Common myeloid progenitor, CD34-positive (primary cell): ENCODE measurements at regions of chr12 and their contacts with region 1.

Region 1: GRCh38 chr12:49763006-49763591 is 21.7 kb downstream of the TMBIM6 start:
- DNase-seq: peak; percentile 77 to 89 (median 85)
- H3K4me3 ChIP-seq: peak overlapping the region in 2 of 7 experiments; percentile 19 to 31
- H3K27ac ChIP-seq: peak overlapping the region in 1 of 2 experiments; percentile 36
- H3K4me1 ChIP-seq: peaks cover 23 to 36% (median 30%) of the 10 kb centered on the region in 4 experiments
- H3K27me3 ChIP-seq: no peaks in the 10 kb centered on the region

Region 2: GRCh38 chr12:49636979-49637755 is 125.9 kb before region 1 on chr12:
- CTCF ChIA-PET with region 1: interaction called, 24 read pairs
- POLR2A ChIA-PET with region 1: no interaction called
- DNase-seq: peak; percentile 69 to 85 (median 84)
- H3K4me3 ChIP-seq: peak overlapping the region in 3 of 7 experiments; percentile 1 to 61 (median 38)
- H3K27ac ChIP-seq: no peak overlapping the region
- H3K4me1 ChIP-seq: peaks cover 3 to 13% (median 7%) of the 10 kb centered on the region in 4 experiments
- H3K27me3 ChIP-seq: no peaks in the 10 kb centered on the region

Region 3: DNA sequence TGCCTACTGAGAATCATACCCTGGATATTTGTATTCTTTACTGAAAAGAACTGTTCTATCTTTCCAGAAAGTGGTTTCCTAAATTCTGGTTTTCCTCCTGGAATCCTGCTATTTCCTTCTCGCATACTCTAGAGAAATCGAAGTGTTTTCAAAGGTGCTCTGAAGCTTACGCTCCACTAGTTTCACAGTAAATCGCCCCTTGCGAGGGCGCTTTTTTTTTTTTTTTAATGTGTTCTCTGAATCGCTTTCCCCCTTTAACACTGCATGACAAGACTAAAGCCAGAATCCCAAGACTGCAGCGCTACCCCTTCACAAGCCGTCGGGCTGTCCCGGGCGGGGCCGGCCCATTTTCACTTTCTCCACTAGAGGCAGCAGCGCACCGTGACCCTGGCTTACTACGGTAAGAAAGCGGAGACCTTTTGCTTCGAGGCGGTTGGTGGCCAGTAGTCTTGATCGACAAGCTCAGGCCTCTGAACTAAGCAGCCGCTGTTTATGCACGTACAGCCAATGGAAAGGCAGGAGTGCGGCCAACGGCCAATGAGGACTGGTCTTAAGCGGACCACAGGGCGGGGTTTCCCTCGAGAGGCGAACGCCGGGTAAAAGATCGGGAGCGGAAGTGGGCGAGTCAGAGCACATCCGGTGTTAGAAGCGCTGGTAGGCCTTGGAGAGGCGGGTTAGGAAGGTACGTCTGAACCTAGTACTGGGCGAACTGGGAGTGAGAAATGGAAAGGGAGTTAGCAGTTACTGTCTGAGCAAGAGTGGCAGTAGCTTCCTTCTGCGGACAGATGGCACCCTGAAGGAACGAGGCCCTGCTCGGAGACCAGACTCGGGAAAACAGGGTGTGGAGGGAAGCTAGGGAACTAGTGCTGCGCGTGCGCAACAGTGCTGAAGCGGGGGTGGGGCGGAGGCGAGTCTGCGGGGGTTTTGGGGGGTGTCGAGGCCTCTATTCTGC is 21.9 kb before region 1 on chr12 and contains the start of gene TMBIM6:
- CTCF ChIA-PET with region 1: interaction called, 64 read pairs
- POLR2A ChIA-PET with region 1: interaction called, 10 read pairs
- DNase-seq: peak; percentile 100
- H3K4me3 ChIP-seq: peak within 1 kb of the TSS; percentile 62 to 94 (median 81)
- H3K27ac ChIP-seq: peak within 1 kb of the TSS; percentile 96 to 99
- H3K4me1 ChIP-seq: peaks cover 12 to 34% (median 21%) of the 10 kb centered on the region in 4 experiments
- H3K27me3 ChIP-seq: no peaks in the 10 kb centered on the region

Region 4: GRCh38 chr12:49750027-49750995 is 12.8 kb before region 1 on chr12:
- CTCF ChIA-PET with region 1: interaction called, 64 read pairs
- POLR2A ChIA-PET with region 1: interaction called, 4 read pairs
- DNase-seq: peak in 2 of 3 donors; percentile 35 to 41
- H3K4me3 ChIP-seq: no peak overlapping the region
- H3K27ac ChIP-seq: peak overlapping the region in 1 of 2 experiments; percentile 50
- H3K4me1 ChIP-seq: peaks cover 0 to 14% (median under 1%) of the 10 kb centered on the region in 4 experiments
- H3K27me3 ChIP-seq: no peaks in the 10 kb centered on the region

Region 5: DNA sequence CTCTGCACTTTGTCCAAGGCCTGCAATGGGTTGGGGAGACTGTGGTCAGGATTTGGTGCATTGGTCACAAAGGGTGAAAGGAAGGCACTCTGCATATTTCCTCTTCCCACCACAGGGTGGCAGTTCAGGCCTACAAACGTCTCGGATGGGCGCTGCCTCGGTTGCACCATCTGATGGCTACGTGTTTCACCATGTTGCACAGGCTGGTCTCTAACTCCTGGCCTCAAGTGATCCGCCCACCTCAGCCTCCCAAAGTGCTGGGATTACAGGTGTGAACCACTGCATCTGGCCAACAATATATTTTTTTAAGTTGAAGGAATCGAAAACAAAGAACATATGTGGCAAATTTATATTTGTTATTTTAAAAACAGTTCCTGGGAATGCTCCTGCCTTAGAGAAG is 13.3 kb after region 1 on chr12:
- CTCF ChIA-PET with region 1: interaction called, 13 read pairs
- POLR2A ChIA-PET with region 1: no interaction called
- DNase-seq: peak; percentile 39 to 63 (median 60)
- H3K4me3 ChIP-seq: no peak overlapping the region
- H3K27ac ChIP-seq: no peak overlapping the region
- H3K4me1 ChIP-seq: peaks cover 0 to 5% (median 0%) of the 10 kb centered on the region in 4 experiments
- H3K27me3 ChIP-seq: no peaks in the 10 kb centered on the region

Region 6: DNA sequence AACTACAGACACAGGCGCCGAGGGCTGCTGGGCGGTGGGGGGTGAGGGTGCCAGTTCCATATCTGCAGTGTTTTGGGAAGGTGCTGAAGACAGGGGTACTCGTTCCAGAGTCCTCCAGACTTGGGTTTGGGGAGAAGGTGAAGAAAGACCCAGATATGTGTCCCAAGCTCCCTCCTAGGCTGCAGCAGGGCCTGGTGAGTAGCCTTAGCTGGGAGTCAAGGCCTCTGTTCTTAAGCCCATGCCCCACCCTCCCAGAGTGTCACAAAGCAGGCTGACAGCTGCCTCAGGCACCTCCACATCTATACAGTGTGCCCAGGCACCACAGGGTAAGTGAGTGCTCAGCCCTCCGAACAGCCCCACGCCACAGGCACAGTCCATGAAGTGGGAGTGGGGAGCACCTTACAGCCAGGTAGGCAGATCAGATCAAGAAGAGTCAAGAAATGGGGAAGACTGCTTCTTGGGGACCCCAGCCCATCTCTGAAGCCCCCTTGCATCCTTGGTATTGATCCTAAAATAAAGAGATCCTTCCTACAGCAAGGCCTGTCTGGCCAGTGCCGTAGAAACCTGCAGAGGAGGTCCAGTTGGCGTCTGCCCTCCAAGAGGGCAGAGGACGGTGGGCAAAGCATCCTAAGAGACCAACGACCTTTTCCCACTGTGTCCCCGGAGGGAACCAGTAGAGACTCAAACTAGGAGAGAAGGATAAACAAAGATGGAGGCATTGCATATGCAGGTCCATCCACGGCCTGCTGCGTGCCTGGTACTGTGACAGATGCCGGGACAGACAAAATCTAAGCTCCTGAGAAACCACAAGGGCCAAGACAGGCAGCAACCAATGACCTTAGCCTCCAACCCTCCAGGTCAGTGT is 61.1 kb after region 1 on chr12:
- CTCF ChIA-PET with region 1: no interaction called
- POLR2A ChIA-PET with region 1: no interaction called
- DNase-seq: no peak
- H3K4me3 ChIP-seq: peak overlapping the region in 2 of 7 experiments; percentile 20 to 27
- H3K27ac ChIP-seq: no peak overlapping the region
- H3K4me1 ChIP-seq: peaks cover 8 to 66% (median 45%) of the 10 kb centered on the region in 4 experiments
- H3K27me3 ChIP-seq: no peaks in the 10 kb centered on the region